ENCODE measurements at regions of chr2 and their contacts with region 1.

Region 1: DNA sequence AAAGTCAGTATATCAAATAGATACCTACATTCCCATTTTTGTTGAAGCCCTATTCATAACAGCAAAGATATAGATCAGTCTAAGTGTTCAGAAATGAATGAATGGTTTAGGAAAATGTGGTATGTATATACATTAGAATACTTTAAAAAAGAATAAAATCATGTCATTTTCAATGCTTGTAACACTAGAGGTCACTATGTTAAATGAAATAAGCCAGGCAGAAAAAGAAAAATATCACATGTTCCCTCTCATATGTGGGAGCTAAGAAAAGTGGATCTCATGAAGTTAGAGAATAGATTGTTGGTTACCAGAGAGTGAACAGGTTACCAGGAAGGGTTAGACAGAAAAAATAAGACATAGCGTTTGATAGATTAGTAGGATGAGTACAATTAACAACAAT is 1111.0 kb upstream of the SLC39A10 start:
- DNase-seq: no peak
- ATAC-seq: peak; percentile 64
- H3K4me3 ChIP-seq: no peak overlapping the region
- H3K27ac ChIP-seq: no peak overlapping the region
- H3K4me1 ChIP-seq: no peaks in the 10 kb centered on the region
- H3K27me3 ChIP-seq: no peaks in the 10 kb centered on the region
- CTCF ChIP-seq: peak in 2 of 3 experiments; percentile 16 to 44; a peak in 1 of 6 replicates
- EP300 ChIP-seq: no peak
- POLR2A ChIP-seq: no peak
- RAD21 ChIP-seq: peak; percentile 48; the same call in 1 of the 2 replicates

Region 2: GRCh38 chr2:194556629-194557028 is 10.7 kb after region 1 on chr2:
- CTCF ChIA-PET with region 1: interaction called, 12 read pairs
- POLR2A ChIA-PET with region 1: no interaction called
- RAD21 ChIA-PET with region 1: interaction called, 4 read pairs
- SMC1A ChIA-PET with region 1: interaction called, 3 read pairs
- in situ Hi-C with region 1: no loop called
- intact Hi-C with region 1: no loop called
- DNase-seq: no peak
- ATAC-seq: no peak
- H3K4me3 ChIP-seq: no peak overlapping the region
- H3K27ac ChIP-seq: no peak overlapping the region
- H3K4me1 ChIP-seq: no peaks in the 10 kb centered on the region
- H3K27me3 ChIP-seq: no peaks in the 10 kb centered on the region
- CTCF ChIP-seq: no peak
- EP300 ChIP-seq: no peak
- POLR2A ChIP-seq: no peak
- RAD21 ChIP-seq: no peak

Region 3: DNA sequence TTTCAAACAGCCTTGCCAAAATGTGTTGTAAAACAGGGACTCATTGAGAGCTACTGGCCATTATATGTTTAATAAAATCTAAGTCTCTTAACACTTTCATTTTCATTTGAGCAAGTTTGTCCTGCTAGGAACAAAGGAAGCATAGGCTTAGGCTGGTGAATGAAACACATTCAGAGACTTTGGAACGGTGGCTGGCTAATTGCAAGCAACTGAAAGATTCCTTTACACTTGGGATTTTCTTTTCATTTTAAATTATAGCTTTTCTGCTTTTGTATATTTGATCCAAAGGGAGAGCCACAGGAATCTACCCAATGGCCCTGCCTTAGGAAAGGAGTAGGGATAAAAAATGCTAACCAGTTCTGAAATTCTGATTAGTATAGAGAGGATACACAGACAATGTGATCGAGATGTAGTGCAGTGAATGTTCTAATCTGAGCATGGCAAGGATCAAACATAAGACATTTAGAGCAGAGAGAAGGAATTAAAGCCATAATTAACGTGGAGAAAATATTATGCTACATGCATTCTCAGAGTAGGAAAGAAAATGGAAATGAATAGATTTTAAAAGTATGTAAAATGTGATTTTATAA is 199.7 kb after region 1 on chr2:
- CTCF ChIA-PET with region 1: no interaction called
- POLR2A ChIA-PET with region 1: no interaction called
- RAD21 ChIA-PET with region 1: no interaction called
- SMC1A ChIA-PET with region 1: no interaction called
- in situ Hi-C with region 1: no loop called
- intact Hi-C with region 1: no loop called
- DNase-seq: no peak
- ATAC-seq: peak; percentile 64
- H3K4me3 ChIP-seq: no peak overlapping the region
- H3K27ac ChIP-seq: no peak overlapping the region
- H3K4me1 ChIP-seq: no peaks in the 10 kb centered on the region
- H3K27me3 ChIP-seq: no peaks in the 10 kb centered on the region
- CTCF ChIP-seq: no peak
- EP300 ChIP-seq: no peak
- POLR2A ChIP-seq: no peak
- RAD21 ChIP-seq: no peak

Region 4: DNA sequence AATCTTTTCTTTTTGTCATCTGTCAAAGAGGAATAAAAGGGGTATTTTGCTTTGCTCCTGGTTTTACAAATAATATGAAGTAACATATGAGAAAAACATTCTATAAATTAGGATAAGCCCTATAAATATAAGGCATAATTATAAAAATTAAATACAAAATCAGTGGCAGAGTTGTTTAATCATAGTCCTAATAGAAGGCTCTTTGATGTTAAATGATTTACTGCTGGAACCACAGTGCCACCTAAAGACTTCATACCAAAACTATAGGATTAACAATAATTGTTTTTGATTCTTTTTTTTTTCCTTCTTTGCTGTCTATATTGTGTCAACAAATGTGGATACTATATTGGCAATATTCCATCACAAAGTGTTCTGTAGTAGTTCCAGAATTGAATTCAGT is 273.4 kb after region 1 on chr2:
- CTCF ChIA-PET with region 1: no interaction called
- POLR2A ChIA-PET with region 1: no interaction called
- RAD21 ChIA-PET with region 1: no interaction called
- SMC1A ChIA-PET with region 1: interaction called, 3 read pairs
- in situ Hi-C with region 1: no loop called
- intact Hi-C with region 1: loop called (anchors 1 kb)
- DNase-seq: no peak
- ATAC-seq: peak; percentile 33; the same call in 2 of the 3 replicates
- H3K4me3 ChIP-seq: no peak overlapping the region
- H3K27ac ChIP-seq: no peak overlapping the region
- H3K4me1 ChIP-seq: no peaks in the 10 kb centered on the region
- H3K27me3 ChIP-seq: no peaks in the 10 kb centered on the region
- CTCF ChIP-seq: no peak; a peak in 1 of 6 replicates
- EP300 ChIP-seq: no peak
- POLR2A ChIP-seq: no peak
- RAD21 ChIP-seq: peak; percentile 54; the same call in 1 of the 2 replicates

Region 5: GRCh38 chr2:194867328-194867727 is 321.4 kb after region 1 on chr2:
- CTCF ChIA-PET with region 1: interaction called, 12 read pairs
- POLR2A ChIA-PET with region 1: no interaction called
- RAD21 ChIA-PET with region 1: interaction called, 9 read pairs
- SMC1A ChIA-PET with region 1: interaction called, 15 read pairs
- in situ Hi-C with region 1: no loop called
- intact Hi-C with region 1: loop called (anchors 1 kb)
- DNase-seq: no peak
- ATAC-seq: peak; percentile 87
- H3K4me3 ChIP-seq: no peak overlapping the region
- H3K27ac ChIP-seq: no peak overlapping the region
- H3K4me1 ChIP-seq: no peaks in the 10 kb centered on the region
- H3K27me3 ChIP-seq: no peaks in the 10 kb centered on the region
- CTCF ChIP-seq: peak; percentile 38 to 42 (median 39); a peak in 5 of 6 replicates
- EP300 ChIP-seq: no peak
- POLR2A ChIP-seq: no peak
- RAD21 ChIP-seq: peak; percentile 36; the same call in 1 of the 2 replicates

Region 6: GRCh38 chr2:195304310-195304709 is 758.3 kb after region 1 on chr2:
- CTCF ChIA-PET with region 1: interaction called, 3 read pairs
- POLR2A ChIA-PET with region 1: no interaction called
- RAD21 ChIA-PET with region 1: interaction called, 3 read pairs
- SMC1A ChIA-PET with region 1: no interaction called
- in situ Hi-C with region 1: loop called (anchors 10 kb)
- intact Hi-C with region 1: no loop called
- DNase-seq: no peak
- ATAC-seq: peak; percentile 34; the same call in 2 of the 3 replicates
- H3K4me3 ChIP-seq: no peak overlapping the region
- H3K27ac ChIP-seq: no peak overlapping the region
- H3K4me1 ChIP-seq: no peaks in the 10 kb centered on the region
- H3K27me3 ChIP-seq: 0 out of 4 replicates have a peak, but pooled peaks cover 0 to 3% of the 10 kb centered on the region in 2 experiments
- CTCF ChIP-seq: peak; percentile 7 to 21 (median 21); a peak in 4 of 6 replicates
- EP300 ChIP-seq: no peak
- POLR2A ChIP-seq: no peak
- RAD21 ChIP-seq: 0 out of 2 replicates have a peak, but pooled peaks have one; percentile 15

Measured in GM12878 (cell line).